ENCODE measurements at regions of chr2 and their contacts with region 1.

Region 1: GRCh38 chr2:187581125-187581896 is 27.1 kb upstream of the TFPI start:
- DNase-seq: peak; percentile 27
- H3K4me3 ChIP-seq: peak overlapping the region in 1 of 3 experiments; percentile 40
- H3K27ac ChIP-seq: no peak overlapping the region
- H3K4me1 ChIP-seq: peaks cover 4% of the 10 kb centered on the region
- H3K27me3 ChIP-seq: peaks cover 2% of the 10 kb centered on the region
- CTCF ChIP-seq: peak; percentile 55 to 62

Region 2: DNA sequence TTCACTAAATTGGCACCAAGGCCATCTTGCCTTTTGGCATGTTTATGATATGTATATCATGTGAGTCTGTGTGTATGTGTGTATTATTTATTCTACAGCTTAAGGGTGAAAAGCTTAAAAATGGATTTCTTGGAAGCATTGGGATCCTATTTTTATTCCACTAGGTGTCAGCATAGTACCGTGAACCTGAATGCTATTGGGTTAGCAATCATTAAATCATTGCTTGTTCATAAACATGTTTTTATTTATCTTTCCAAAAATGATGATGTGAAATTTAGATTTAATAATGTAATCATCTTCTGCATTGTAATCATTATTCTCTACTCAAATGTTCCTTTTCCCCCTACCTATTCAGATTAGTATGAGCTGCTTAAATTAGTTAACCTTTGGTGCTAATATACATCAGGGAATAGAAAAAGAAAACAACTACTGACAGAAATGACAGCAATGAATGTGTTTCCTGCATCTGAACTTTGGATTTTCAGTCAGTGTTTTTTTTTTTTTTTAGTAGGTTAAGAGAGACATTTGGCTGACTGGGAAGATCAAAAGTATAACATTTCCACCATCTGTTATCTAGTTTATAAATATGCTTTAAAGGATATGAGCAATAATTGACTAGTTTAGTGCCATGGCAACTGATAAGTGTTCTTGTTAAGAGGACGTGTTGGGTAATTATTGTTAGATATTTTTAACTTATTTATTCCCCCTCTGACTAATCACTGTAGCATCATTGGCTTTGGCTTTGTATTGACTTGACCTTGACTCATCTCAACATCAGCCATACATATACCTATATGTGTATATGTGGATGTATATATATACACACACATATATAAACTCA is 718.2 kb before region 1 on chr2:
- CTCF ChIA-PET with region 1: no interaction called
- dilution Hi-C with region 1: no loop called
- in situ Hi-C with region 1: no loop called
- intact Hi-C with region 1: loop called (anchors 10 kb)
- DNase-seq: peak; percentile 17
- H3K4me3 ChIP-seq: no peak overlapping the region
- H3K27ac ChIP-seq: no peak overlapping the region
- H3K4me1 ChIP-seq: no peaks in the 10 kb centered on the region
- H3K27me3 ChIP-seq: no peaks in the 10 kb centered on the region
- CTCF ChIP-seq: peak; percentile 64 to 70

Region 3: DNA sequence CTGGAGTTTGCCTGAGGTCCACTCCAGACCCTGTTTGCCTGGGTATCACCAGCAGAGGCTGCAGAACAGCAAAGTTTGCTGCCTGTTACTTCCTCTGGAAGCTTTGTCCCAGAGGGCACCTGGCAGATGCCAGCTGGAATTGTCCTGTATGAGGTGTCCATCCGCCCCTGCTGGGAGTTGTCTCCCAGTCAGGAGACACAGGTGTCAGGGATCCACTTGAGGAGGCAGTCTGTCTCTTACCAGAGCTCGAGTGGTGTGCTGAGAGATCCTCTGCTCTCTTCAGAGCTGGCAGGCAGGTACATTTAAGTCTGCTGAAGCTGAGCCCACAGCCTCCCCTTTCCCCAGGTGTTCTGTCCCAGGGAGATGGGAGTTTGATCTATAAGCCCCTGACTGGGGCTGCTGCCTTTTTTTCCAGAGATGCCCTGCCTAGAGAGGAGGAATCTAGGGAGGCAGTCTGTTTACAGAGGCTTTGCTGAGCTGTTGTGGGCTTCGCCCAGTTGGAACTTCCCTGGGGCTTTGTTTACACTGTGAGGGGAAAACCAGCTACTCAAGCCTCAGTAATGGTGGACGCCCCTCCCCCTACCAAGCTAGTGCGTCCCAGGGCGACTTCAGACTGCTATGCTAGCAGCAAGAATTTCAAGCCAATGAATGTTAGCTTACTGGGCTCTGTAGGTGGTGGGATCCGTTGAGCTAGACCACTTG is 61.7 kb before region 1 on chr2:
- CTCF ChIA-PET with region 1: no interaction called
- dilution Hi-C with region 1: loop called (anchors 5 kb)
- in situ Hi-C with region 1: no loop called
- intact Hi-C with region 1: no loop called
- DNase-seq: no peak
- H3K4me3 ChIP-seq: no peak overlapping the region
- H3K27ac ChIP-seq: no peak overlapping the region
- H3K4me1 ChIP-seq: no peaks in the 10 kb centered on the region
- H3K27me3 ChIP-seq: no peaks in the 10 kb centered on the region
- CTCF ChIP-seq: no peak

Region 4: DNA sequence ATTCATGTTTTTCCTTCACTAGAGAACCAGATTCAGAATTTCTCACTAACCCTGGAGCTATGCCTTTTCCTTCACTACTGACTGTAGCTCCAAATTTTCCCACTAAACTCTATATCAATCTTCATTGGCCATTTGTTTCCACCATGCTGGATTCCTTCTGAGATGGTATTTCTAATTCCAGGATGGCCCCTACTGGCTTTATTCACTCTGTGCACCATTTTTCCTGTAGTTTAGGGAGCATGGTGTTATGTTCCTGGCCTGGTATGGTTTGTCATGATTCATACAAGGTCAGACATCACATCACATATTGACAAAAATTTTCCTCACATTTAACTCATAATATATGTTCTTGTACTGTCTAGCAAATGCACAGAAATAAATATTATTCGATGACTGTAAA is 202.1 kb after region 1 on chr2:
- CTCF ChIA-PET with region 1: interaction called, 4 read pairs
- dilution Hi-C with region 1: no loop called
- in situ Hi-C with region 1: no loop called
- intact Hi-C with region 1: loop called (anchors 1 kb)
- DNase-seq: peak; percentile 19
- H3K4me3 ChIP-seq: no peak overlapping the region
- H3K27ac ChIP-seq: no peak overlapping the region
- H3K4me1 ChIP-seq: no peaks in the 10 kb centered on the region
- H3K27me3 ChIP-seq: no peaks in the 10 kb centered on the region
- CTCF ChIP-seq: peak in 1 of 2 donors; percentile 52

Region 5: DNA sequence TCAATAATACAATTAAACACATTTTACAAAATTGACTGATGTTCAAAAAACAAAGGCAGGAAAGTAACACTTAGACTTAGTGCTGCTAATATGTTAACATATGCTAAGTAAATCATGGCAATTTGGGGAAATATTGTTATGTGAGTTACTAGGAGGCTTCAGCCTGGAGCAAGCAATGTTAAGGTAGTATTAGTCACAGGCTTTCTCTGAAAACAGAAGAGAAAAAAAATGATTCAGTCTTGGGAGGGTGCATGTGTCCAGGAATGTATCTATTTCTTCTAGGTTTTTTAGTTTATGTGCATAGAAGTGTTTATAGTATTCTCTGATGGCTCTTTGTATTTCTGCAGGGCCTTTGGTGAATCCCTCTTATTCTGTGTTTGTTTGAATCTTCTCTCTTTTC is 318.7 kb after region 1 on chr2:
- CTCF ChIA-PET with region 1: no interaction called
- dilution Hi-C with region 1: no loop called
- in situ Hi-C with region 1: no loop called
- intact Hi-C with region 1: no loop called
- DNase-seq: peak; percentile 16
- H3K4me3 ChIP-seq: no peak overlapping the region
- H3K27ac ChIP-seq: no peak overlapping the region
- H3K4me1 ChIP-seq: no peaks in the 10 kb centered on the region
- H3K27me3 ChIP-seq: no peaks in the 10 kb centered on the region
- CTCF ChIP-seq: no peak

Region 6: DNA sequence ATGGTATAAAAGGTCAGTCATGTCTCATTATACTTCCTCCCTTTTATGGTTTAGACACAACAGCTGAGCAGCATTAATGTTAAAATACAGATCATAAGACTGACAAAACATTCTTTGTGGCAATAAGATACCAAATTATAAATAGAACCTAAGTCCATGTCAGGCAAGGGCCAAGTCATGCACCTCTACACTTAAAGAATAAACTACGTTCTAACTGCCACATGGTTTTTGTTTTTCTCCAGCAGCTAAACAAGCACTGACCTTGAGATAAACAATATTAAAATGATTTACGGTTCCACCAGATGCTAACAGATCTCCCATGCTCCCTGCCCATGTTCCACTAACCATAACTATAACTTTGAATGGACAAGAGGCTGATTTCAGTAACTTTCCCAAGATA is 341.5 kb after region 1 on chr2:
- CTCF ChIA-PET with region 1: no interaction called
- dilution Hi-C with region 1: no loop called
- in situ Hi-C with region 1: no loop called
- intact Hi-C with region 1: no loop called
- DNase-seq: no peak
- H3K4me3 ChIP-seq: no peak overlapping the region
- H3K27ac ChIP-seq: no peak overlapping the region
- H3K4me1 ChIP-seq: no peaks in the 10 kb centered on the region
- H3K27me3 ChIP-seq: no peaks in the 10 kb centered on the region
- CTCF ChIP-seq: no peak

Region 7: DNA sequence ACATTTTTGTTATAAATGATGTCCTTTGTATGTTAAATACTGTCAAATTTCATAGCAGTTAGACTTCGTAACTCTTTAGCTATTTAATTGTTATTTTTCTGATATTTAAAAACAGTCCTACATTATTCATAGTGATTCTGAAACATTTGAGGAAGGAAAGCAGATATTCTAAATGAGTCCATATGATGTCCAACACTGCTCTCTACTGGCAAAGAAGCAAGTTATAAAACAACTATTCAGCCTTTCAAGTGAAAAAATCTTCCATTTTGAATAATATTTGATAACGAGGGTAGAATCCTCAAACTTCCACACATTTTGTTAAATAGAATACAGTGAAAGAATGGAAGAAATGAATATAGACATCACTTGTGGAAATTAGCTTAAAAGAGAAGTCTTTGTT is 931.1 kb after region 1 on chr2:
- CTCF ChIA-PET with region 1: no interaction called
- dilution Hi-C with region 1: no loop called
- in situ Hi-C with region 1: loop called in 1 of 2 experiments (anchors 25 kb)
- intact Hi-C with region 1: loop called (anchors 1 kb)
- DNase-seq: peak; percentile 25
- H3K4me3 ChIP-seq: no peak overlapping the region
- H3K27ac ChIP-seq: no peak overlapping the region
- H3K4me1 ChIP-seq: no peaks in the 10 kb centered on the region
- H3K27me3 ChIP-seq: no peaks in the 10 kb centered on the region
- CTCF ChIP-seq: peak; percentile 44 to 59

Measured in mammary epithelial cell (primary cell).